ENCODE measurements at regions of chr6 and their contacts with region 1.

Region 1: GRCh38 chr6:135722679-135723078 is 128.8 kb upstream of the PDE7B start:
- DNase-seq: no peak
- H3K4me3 ChIP-seq: no peak overlapping the region
- H3K27ac ChIP-seq: no peak overlapping the region
- H3K4me1 ChIP-seq: no peaks in the 10 kb centered on the region
- H3K27me3 ChIP-seq: no peaks in the 10 kb centered on the region
- CTCF ChIP-seq: no peak

Region 2: GRCh38 chr6:135651964-135652755 is 70.5 kb before region 1 on chr6:
- intact Hi-C with region 1: no loop called
- DNase-seq: no peak
- H3K4me3 ChIP-seq: no peak overlapping the region
- H3K27ac ChIP-seq: no peak overlapping the region
- H3K4me1 ChIP-seq: no peaks in the 10 kb centered on the region
- H3K27me3 ChIP-seq: no peaks in the 10 kb centered on the region
- CTCF ChIP-seq: no peak

Region 3: DNA sequence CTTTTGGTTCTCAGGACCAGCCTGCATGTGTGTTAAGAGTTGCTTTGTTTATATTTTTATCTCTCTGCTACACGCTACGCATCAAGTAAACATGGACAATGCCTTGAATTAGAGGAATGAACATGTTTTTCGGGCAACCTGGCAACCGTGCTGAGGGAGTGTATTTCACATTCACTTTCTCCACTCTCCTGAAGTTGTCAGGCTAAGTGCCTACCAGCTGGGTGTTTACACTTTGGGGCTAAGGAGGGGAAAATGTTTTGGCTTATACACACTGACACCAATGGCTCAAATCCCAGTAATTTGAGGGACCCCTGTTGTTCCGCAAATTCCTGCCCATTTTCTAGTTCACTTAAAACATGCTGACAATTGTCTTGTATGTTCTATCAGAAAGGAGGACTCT is 12.6 kb before region 1 on chr6:
- intact Hi-C with region 1: loop called (anchors 1 kb)
- DNase-seq: no peak
- H3K4me3 ChIP-seq: no peak overlapping the region
- H3K27ac ChIP-seq: no peak overlapping the region
- H3K4me1 ChIP-seq: no peaks in the 10 kb centered on the region
- H3K27me3 ChIP-seq: no peaks in the 10 kb centered on the region
- CTCF ChIP-seq: no peak

Measured in tibial artery (tissue), 4 donors.